CD8-positive, alpha-beta T cell (primary cell): ENCODE measurements at regions of chr1 and their contacts with region 1.

Region 1: DNA sequence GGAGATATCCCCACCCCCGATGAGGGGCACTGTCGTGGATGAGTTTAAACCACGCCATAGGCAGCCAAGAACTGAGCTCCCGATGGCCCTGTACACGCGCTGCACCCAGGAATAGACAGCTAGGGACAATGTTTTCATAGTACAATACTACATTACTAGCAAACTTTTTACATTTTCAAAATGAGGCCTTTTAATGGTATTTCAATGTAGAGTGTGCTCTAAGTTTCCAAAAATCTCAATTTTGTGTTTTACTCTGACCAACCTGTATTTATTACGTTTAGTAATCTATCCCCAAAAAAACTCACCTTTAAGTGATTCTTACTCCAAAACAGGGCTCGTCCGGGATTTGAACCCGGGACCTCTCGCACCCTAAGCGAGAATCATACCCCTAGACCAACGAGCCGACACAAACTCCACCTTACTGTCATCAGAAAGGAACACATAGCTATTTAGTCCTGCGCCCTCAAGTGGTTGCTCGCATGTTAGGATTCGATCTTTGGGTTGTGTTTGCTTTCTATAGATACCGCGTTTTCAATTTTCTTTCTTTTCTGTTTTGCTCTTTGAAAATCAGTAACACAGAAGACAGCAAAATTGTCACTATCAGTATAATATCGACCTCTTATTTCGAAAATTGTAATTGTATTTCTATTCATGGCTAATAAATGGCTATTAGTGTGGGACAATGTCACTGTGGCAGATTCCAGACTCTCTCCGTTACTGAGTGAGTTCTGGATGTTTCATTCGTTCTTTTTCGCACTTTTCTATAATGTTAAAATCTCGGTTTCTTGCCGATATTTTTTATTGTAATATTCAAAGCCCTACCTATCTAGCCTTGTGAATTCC is 6.4 kb upstream of the MPZL1 start:
- DNase-seq: peak; percentile 78 to 95 (median 85)
- ATAC-seq: peak; percentile 59
- H3K4me3 ChIP-seq: peak overlapping the region; percentile 59 to 90
- H3K4me3 Mint-ChIP-seq: peak overlapping the region; percentile 98
- H3K27ac ChIP-seq: peak overlapping the region; percentile 23 to 24
- H3K27ac Mint-ChIP-seq: peak overlapping the region; percentile 92
- H3K4me1 ChIP-seq: peaks cover 13% of the 10 kb centered on the region
- H3K4me1 Mint-ChIP-seq: peaks cover 31% of the 10 kb centered on the region
- H3K27me3 ChIP-seq: no peaks in the 10 kb centered on the region
- H3K27me3 Mint-ChIP-seq: no peaks in the 10 kb centered on the region
- CTCF ChIP-seq: peak; percentile 86

Region 2: DNA sequence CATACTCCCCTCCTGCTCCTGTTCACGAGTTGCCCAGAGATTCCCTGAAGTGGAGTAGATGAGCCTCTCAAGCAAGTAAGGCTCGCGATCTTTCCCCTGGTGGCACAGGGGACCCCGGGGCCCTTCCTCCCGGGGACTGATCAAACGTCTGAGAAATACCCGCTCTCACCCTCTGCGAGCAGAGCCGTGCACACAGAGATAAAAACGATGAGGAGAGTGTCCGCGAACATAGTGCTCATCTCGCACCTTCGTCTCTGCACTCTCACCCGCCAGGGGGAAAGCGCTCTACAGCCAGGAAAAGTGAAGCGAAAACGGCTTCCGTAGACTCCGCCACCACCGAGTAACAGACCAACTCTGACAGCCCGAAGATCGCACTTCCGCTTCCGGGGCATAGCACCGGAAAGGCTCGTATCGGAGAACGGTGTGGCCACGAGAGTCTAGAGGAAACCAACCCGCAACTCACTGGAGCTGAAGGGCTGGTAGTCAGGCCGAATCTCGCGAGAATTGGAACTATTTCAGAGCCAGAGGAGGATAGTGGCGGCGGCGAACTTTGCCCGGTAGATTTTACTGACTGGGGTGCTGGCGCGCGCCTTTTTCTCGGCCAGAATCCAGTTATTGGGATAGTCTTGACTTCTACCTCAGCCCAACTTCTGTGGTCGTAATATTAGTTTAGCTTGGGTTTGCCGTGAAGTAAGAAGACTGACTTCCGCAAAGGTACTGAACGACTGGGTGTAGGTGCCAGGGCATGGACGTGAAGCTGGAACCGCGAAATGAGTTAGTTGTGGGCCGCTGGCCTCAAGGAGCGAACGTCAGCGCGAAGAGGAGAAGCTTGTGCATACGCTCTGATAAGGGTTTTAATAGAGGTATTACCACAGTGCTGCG is 1946.6 kb before region 1 on chr1 and contains the start of gene TMCO1:
- CTCF ChIA-PET with region 1: no interaction called
- POLR2A ChIA-PET with region 1: no interaction called
- intact Hi-C with region 1: loop called in 1 of 2 experiments (anchors 10 kb)
- DNase-seq: peak; percentile 84 to 99 (median 92)
- ATAC-seq: peak; percentile 93
- H3K4me3 ChIP-seq: peak within 1 kb of the TSS; percentile 85 to 93
- H3K4me3 Mint-ChIP-seq: peak within 1 kb of the TSS; percentile 99
- H3K27ac ChIP-seq: peak within 1 kb of the TSS; percentile 71 to 96
- H3K27ac Mint-ChIP-seq: peak within 1 kb of the TSS; percentile 99
- H3K4me1 ChIP-seq: peaks cover 50% of the 10 kb centered on the region
- H3K4me1 Mint-ChIP-seq: peaks cover 65% of the 10 kb centered on the region
- H3K27me3 ChIP-seq: no peaks in the 10 kb centered on the region
- H3K27me3 Mint-ChIP-seq: no peaks in the 10 kb centered on the region
- CTCF ChIP-seq: peak; percentile 24
- total RNA-seq, gene TMCO1: 30.5 to 33.5 TPM

Region 3: GRCh38 chr1:167442124-167442848 is 273.1 kb before region 1 on chr1:
- CTCF ChIA-PET with region 1: no interaction called
- POLR2A ChIA-PET with region 1: no interaction called
- intact Hi-C with region 1: loop called in 1 of 2 experiments (anchors 10 kb)
- DNase-seq: peak; percentile 78 to 91 (median 89)
- ATAC-seq: peak; percentile 80
- H3K4me3 ChIP-seq: no peak overlapping the region
- H3K4me3 Mint-ChIP-seq: no peak overlapping the region
- H3K27ac ChIP-seq: peak overlapping the region in 1 of 2 experiments; percentile 71
- H3K27ac Mint-ChIP-seq: peak overlapping the region; percentile 85
- H3K4me1 ChIP-seq: peaks cover 81% of the 10 kb centered on the region
- H3K4me1 Mint-ChIP-seq: peaks cover 91% of the 10 kb centered on the region
- H3K27me3 ChIP-seq: no peaks in the 10 kb centered on the region
- H3K27me3 Mint-ChIP-seq: no peaks in the 10 kb centered on the region
- CTCF ChIP-seq: peak; percentile 75

Region 4: DNA sequence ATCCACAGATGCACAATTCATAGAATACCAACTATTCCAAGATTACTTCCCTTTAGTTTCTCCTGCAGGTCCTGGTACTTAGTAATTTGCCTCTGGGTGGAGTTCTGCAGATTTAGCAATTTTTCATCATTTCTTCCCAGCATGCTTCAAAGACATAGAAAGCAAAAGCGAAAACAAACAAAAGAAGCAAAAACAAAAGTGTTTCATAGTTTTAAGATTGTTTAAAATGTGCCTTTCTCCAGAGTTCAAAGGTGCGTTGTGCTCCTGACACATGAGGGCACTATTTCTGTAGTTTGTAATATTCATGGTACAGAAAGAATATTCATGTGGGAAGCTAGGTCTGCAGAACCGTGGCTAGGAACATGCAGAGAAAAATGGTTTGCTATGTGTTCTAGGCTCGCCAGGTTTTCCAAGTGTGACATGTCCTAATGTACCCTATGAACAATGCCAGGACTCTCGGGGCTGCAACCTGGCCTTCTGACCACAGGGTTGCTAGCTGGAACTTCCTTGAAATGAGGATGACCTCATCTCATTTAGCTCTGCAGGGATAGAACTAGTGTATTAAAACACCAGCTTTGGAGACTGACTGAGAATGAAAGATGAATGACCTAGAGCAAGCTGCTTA is 115.3 kb before region 1 on chr1:
- CTCF ChIA-PET with region 1: interaction called, 27 read pairs
- POLR2A ChIA-PET with region 1: interaction called, 7 read pairs
- intact Hi-C with region 1: loop called in 1 of 2 experiments (anchors 1 kb)
- DNase-seq: peak in 6 of 9 experiments; percentile 32 to 81 (median 58)
- ATAC-seq: peak; percentile 88
- H3K4me3 ChIP-seq: no peak overlapping the region
- H3K4me3 Mint-ChIP-seq: peak overlapping the region; percentile 38
- H3K27ac ChIP-seq: no peak overlapping the region
- H3K27ac Mint-ChIP-seq: no peak overlapping the region
- H3K4me1 ChIP-seq: peaks cover 38% of the 10 kb centered on the region
- H3K4me1 Mint-ChIP-seq: peaks cover 42% of the 10 kb centered on the region
- H3K27me3 ChIP-seq: no peaks in the 10 kb centered on the region
- H3K27me3 Mint-ChIP-seq: no peaks in the 10 kb centered on the region
- CTCF ChIP-seq: peak; percentile 71

Region 5: DNA sequence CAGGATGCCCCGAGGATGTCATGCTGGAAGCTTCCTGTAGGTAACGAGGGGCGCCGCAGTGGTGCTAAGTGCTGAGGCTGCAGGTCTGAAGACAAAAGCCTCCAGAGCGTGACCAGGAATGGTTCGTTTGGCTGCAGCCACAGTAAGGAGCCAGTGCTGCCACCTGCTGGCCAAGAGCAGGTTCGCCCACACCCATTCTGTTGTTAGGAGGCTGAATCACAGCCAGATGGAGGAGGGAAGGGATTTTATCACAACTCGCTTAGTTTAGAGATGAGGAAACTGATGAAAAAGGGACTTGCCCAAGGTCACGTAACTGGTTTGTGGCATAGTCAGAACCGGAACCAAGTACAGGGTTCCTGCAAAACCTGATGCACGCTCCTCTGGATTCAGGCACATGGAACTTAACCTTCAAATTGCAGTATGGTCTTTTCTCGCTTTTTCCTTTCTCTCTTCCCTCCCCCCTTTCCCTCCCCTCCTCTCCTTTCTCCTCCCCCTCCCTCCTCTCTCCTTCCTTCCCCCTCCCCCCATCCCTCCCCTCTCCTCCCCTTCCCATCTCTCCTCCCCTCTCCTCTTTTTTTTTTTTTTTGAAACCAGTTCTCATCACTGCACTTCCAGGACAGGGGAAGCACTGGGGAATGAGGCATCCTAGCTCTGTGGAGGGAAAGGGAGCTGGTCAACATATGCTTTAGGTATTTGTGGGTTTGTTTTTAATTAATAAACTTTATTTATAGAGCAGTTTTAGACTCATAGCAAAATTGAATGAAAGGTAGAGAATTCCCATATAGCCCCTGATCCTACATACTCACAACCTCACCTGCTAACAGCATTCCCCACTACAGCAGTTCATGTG is 88.2 kb after region 1 on chr1:
- CTCF ChIA-PET with region 1: interaction called, 4 read pairs
- POLR2A ChIA-PET with region 1: no interaction called
- intact Hi-C with region 1: loop called (anchors 2 to 5 kb)
- DNase-seq: peak; percentile 58 to 89 (median 86)
- ATAC-seq: peak; percentile 81
- H3K4me3 ChIP-seq: no peak overlapping the region
- H3K4me3 Mint-ChIP-seq: peak overlapping the region; percentile 58
- H3K27ac ChIP-seq: no peak overlapping the region
- H3K27ac Mint-ChIP-seq: peak overlapping the region; percentile 47
- H3K4me1 ChIP-seq: peaks cover 21% of the 10 kb centered on the region
- H3K4me1 Mint-ChIP-seq: peaks cover 24% of the 10 kb centered on the region
- H3K27me3 ChIP-seq: no peaks in the 10 kb centered on the region
- H3K27me3 Mint-ChIP-seq: no peaks in the 10 kb centered on the region
- CTCF ChIP-seq: peak; percentile 86

Region 6: DNA sequence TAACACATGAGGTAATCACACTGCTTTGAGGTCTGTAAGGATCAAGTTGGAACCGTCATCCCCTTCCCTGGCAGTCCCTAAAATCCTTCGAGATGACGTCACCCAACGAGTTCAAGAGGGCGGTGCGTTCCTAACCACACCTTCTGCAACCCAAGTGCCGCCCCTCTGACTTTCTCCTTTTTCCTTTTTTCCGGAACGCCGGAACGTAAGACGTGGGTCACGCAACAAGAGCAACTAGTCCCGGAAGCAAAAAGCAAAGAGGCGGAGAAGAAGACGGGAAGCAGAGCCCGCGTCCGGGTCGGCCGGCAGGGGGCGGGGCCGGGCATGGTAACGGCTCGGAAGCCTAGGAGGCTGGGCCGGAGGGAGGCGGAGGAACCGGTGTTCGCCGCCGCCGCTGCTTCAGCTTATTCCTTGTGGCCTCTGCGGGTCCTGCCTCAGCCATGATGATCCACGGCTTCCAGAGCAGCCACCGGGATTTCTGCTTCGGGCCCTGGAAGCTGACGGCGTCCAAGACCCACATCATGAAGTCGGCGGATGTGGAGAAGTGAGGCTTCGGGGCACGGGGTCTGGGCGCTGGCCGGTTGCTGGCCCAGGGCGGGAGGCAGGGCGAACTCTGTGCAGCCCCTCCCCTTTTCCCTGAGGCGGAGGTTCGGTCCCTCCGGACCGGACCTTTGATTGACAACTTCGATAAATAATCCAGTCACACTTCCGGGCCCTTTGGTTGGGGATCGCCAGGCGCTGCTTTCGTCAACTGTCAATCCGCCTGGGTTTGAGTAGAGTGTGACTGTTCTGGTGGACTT is 463.5 kb after region 1 on chr1 and contains the start of gene TIPRL:
- CTCF ChIA-PET with region 1: no interaction called
- POLR2A ChIA-PET with region 1: no interaction called
- intact Hi-C with region 1: loop called in 1 of 2 experiments (anchors 5 kb)
- DNase-seq: peak; percentile 84 to 97 (median 93)
- ATAC-seq: peak; percentile 86
- H3K4me3 ChIP-seq: peak within 1 kb of the TSS; percentile 98 to 100
- H3K4me3 Mint-ChIP-seq: no peak within 1 kb of the TSS
- H3K27ac ChIP-seq: peak within 1 kb of the TSS; percentile 95 to 97
- H3K27ac Mint-ChIP-seq: no peak within 1 kb of the TSS
- H3K4me1 ChIP-seq: peaks cover 15% of the 10 kb centered on the region
- H3K4me1 Mint-ChIP-seq: peaks cover 12% of the 10 kb centered on the region
- H3K27me3 ChIP-seq: no peaks in the 10 kb centered on the region
- H3K27me3 Mint-ChIP-seq: peaks cover 7% of the 10 kb centered on the region
- CTCF ChIP-seq: peak; percentile 49
- total RNA-seq, gene TIPRL: 15.0 to 18.3 TPM

Region 7: GRCh38 chr1:169367486-169368405 is 1652.4 kb after region 1 on chr1 and contains the starts of genes BLZF1 and NME7:
- CTCF ChIA-PET with region 1: no interaction called
- POLR2A ChIA-PET with region 1: no interaction called
- intact Hi-C with region 1: loop called in 1 of 2 experiments (anchors 2 kb)
- DNase-seq: peak; percentile 96 to 99 (median 98)
- ATAC-seq: peak; percentile 93
- H3K4me3 ChIP-seq: peak within 1 kb of the TSS; percentile 84 to 94
- H3K4me3 Mint-ChIP-seq: peak within 1 kb of the TSS; percentile 51
- H3K27ac ChIP-seq: peak within 1 kb of the TSS; percentile 88 to 97
- H3K27ac Mint-ChIP-seq: peak within 1 kb of the TSS; percentile 32
- H3K4me1 ChIP-seq: peaks cover 23% of the 10 kb centered on the region
- H3K4me1 Mint-ChIP-seq: peaks cover 49% of the 10 kb centered on the region
- H3K27me3 ChIP-seq: no peaks in the 10 kb centered on the region
- H3K27me3 Mint-ChIP-seq: no peaks in the 10 kb centered on the region
- CTCF ChIP-seq: no peak
- total RNA-seq, gene BLZF1: 11.1 to 13.6 TPM
- total RNA-seq, gene NME7: 5.3 to 7.7 TPM